AG04449 (cell line): ENCODE measurements at regions of chr19 and their contacts with region 1.

Region 1: GRCh38 chr19:42092350-42092749 is 16.4 kb downstream of the ZNF574 start:
- DNase-seq: no peak
- H3K4me3 ChIP-seq: no peak overlapping the region
- CTCF ChIP-seq: peak; percentile 46

Region 2: DNA sequence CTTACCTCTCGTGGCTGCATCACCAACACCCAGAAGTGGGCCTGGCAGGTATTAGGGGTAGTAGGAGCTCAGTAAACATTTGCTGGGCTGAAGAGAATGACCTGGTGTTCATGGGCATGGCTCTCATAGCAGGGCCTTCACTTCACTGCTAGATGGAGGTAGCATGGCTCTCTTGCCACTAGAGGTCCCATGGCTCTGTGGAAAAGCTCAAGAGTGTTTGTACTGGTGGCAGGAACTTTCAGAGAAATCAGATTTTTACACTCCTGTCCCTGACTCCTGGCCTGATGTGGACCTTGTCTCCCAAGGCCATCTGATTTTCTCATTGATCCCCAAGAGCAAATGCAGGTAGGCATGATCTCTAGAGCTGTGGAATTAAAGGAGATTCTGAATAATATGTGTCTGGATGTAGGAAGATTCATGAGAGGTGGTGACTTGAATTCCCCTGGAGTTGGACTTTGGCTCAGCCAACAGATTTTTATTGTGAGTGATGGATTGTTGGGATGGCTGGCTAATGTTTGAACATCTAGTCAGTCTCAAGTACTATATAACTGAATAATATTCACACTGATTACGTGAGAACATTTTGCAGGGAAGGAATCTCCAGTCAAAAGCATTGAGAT is 10.7 kb before region 1 on chr19:
- CTCF ChIA-PET with region 1: interaction called, 11 read pairs
- POLR2A ChIA-PET with region 1: no interaction called
- DNase-seq: no peak
- H3K4me3 ChIP-seq: no peak overlapping the region
- CTCF ChIP-seq: peak; percentile 72